GM10248 (cell line): ENCODE measurements at regions of chr14 and their contacts with region 1.

Region 1: DNA sequence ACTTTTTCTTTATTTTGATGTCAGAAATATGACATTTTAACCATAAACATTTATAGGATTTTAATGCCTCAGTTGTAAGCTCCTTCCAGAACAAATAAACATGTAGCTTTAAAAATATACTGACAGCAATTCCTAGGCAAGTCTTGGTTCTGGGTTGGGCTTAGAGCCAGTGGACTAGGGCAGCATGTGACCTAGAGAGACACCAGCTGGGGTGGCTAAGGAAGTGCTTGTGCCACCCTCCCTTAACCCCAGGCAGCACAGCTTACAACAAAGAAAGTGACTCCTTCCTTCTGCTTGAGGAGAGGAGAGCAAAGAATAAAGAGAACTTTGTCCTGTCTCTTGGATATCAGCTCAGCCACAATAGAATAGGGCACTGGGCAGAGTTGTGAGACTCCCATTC is 61.6 kb upstream of the KTN1 start:
- DNase-seq: no peak
- CTCF ChIP-seq: no peak

Region 2: DNA sequence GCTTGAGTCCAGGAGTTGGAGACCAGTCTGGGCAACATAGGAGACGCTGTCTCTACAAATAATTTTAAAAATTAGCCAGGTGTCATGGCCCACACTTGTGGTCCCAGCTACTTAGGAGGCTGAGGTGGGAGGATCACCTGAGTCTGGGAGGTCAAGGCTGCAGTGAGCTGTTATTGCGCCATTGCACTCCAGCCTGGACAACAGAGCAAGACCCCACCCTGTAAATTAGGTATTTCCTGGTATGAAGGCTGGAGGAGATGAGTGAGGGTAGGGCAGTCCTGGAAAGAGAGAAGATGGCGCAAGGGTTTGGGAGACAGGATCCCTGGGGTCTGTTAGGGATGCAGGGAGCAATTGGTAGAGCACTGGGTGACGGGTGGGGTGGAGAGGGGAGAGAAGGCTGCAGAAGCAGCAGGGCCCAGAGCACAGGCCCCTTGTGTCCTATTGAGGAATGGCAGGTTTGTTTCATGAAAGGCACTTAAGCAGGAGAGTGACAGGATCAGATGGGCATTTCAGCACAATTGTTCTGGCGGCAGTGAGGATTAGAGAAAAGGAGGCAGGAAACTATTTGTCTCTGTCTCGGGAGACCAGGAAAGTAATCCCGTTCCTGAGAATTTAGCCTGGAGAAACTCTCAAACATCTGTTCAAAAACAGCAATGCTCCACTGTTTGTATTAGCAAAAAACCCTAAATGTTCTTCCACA is 14.4 kb after region 1 on chr14:
- CTCF ChIA-PET with region 1: interaction called, 10 read pairs
- POLR2A ChIA-PET with region 1: no interaction called
- DNase-seq: no peak
- CTCF ChIP-seq: no peak